AG04449 (cell line): ENCODE measurements at regions of chr21 and their contacts with region 1.

Region 1: DNA sequence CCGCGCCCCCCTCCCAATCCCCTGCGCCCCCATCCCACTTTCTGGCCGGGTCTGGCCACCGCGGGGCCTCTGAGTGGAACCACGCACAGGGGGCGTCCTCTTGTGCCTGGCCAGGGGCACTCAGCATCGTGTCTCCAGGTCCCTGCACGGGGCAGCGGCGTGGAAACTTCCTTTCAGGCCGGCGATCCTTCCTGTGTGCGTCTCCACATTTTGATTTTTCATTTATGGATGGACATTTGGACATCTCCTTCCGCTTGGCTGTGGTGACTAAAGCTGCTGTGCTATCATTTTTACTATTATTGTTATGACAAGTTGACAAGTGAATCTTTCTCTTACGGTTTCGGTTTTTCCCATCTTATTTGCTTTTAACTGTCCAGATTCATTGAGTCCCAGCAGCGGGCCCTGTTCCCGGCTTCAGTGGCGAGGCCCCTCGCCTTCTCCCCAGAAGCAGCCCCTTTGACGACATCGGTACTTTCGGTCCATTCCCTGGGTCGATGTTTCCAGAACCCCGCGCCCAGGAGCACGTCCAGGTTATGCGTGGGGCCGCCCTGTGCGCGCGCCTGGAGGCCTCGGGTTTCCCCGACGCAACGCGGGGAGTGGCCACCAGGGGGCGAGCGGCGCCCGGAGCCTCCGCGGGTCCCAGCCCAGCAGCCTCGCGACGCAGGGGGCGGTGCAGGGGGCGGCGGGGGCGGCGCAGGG is 12.4 kb upstream of the SLC19A1 start:
- DNase-seq: no peak
- H3K4me3 ChIP-seq: peak overlapping the region; percentile 68
- CTCF ChIP-seq: peak; percentile 94

Region 2: DNA sequence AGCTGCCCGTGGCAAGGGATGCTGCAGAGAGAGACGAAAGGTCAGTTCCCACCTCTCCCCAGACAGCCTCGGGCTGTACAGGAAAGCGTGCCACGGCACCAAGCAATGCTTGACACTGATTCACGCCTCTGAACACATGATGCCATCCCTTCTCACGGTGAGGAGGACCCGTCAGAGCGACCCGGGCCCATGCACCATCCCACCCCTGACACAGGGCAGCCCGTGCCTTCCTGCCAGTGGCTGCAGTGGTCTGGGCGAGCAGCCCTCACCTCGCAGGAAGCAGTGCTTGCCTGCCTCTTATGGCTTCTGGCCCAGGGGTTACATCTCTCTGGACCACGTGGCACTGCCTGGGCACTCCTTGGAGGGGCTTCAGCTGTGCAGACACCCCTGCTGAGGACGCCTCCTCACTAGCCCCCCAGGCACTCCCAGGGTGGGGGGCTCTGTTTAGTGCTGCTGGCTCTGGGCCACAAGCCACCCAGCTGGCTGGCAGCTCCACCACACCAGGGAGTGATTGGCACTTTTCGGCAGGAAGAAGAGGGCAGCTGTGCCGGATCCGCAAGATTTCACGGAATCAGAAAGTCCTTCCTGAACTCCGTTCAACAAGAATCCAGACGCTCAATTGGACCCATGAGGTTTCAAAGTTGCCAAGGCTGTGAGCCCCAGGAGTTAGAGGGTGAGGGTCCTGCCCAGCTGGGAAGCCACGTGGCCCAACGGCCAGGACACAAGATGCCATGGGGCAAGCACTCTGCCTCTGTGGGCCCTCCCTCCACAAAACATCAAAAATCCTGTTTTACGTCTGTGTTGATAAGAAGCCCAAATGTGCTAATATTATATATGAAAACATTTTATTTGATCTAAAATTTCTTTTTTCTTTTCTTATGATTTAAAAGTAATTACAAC is 22.5 kb after region 1 on chr21:
- CTCF ChIA-PET with region 1: interaction called, 57 read pairs
- POLR2A ChIA-PET with region 1: no interaction called
- DNase-seq: no peak
- H3K4me3 ChIP-seq: no peak overlapping the region
- CTCF ChIP-seq: no peak

Region 3: GRCh38 chr21:45640888-45641479 is 86.4 kb after region 1 on chr21:
- CTCF ChIA-PET with region 1: interaction called, 13 read pairs
- POLR2A ChIA-PET with region 1: no interaction called
- DNase-seq: no peak
- H3K4me3 ChIP-seq: no peak overlapping the region
- CTCF ChIP-seq: peak; percentile 27

Region 4: GRCh38 chr21:45827302-45827692 is 272.7 kb after region 1 on chr21:
- CTCF ChIA-PET with region 1: interaction called, 164 read pairs
- POLR2A ChIA-PET with region 1: no interaction called
- DNase-seq: no peak
- H3K4me3 ChIP-seq: no peak overlapping the region
- CTCF ChIP-seq: no peak

Region 5: DNA sequence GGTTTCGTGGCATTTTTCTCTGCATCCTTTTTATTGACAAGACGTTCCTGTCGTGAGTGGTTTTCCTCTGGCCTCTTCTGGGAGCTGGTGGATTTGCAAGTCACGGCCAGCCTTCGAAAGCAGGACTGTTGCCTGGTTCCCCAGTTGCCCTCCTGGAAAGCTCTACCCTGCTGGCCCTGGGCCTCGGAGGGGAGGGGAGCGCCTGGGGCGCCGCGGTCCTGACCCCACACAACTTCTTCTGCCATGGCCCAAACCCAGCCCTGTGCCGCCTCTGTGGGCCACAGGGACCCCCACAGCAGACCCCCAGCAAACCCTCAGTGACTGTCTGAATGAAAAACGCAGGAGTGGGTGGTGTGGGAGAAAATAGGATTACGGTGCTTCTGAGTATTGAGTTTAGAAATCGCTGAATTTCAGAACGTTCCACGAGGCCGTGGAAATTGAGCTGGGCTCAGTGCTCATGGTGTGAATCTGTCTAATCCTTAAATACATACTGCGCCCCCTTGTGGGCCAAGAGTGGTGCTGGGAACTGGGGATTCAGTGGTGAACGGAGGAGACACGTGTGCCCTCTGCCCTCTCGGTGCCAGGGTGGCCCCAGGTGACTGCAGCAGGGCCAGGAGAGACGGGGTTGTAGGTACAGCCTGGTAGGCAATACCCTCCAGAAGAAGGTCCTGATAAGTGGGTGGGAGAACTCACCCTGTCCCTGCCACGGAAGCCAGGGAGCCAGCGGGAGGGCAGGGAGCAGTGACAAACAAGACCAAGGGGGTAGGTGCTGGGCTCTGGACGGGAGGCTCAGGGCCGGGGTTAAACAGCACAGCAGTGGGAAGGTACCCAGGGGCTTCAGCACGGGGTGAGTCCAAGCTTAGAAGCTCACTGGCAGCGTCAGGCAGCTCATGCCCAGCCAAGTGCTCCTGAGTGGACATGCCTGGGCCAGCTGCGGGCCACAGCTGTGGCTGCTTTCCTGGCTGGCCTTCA is 325.8 kb after region 1 on chr21:
- CTCF ChIA-PET with region 1: interaction called, 20 read pairs
- POLR2A ChIA-PET with region 1: no interaction called
- DNase-seq: no peak
- H3K4me3 ChIP-seq: no peak overlapping the region
- CTCF ChIP-seq: peak; percentile 68